CD4-positive, alpha-beta memory T cell (primary cell): ENCODE measurements at regions of chr3 and their contacts with region 1.

Region 1: DNA sequence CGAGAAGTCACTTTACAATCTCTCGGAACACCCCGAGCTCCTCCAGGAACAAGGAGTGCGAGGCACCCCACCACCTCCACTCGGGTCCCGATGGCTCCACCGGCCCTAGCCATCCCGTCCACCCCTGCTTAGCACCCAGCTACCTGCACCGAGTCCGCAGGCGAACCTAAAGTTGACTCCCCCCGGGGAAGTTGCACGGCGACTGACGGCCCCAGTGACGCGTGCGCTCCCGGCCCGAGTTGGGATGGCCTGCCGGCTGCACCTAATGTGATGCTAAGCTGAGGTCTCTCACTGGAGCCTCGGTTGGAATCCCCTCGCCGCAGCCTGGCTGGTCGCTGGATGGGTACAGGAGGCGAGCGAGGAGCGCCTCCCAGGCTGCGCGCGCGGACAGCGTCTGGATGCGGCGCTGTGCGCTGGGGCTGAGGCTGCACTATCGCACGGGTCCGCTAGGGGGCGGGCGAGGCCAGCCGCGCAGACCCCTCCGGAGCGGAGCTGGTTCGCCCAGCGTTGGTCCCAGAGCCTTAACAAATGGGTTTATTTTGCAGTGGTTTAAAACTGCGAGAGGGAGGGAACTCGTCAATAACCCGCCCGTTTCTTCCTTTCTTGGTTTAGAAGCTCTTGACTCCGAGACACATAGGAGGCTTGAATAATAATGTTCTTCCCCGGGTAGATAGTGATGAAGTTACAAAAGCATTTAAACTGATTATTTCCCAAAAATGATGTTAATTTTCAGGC is at the start of gene OXTR:
- DNase-seq: peak in 4 of 5 donors; percentile 18 to 33 (median 21)
- H3K4me3 ChIP-seq: peak within 1 kb of the TSS in 1 of 2 donors; percentile 19
- H3K4me3 Mint-ChIP-seq: peak within 1 kb of the TSS in 7 of 8 donors; percentile 2 to 75 (median 51)
- H3K27ac ChIP-seq: no peak within 1 kb of the TSS
- H3K27ac Mint-ChIP-seq: no peak within 1 kb of the TSS
- H3K4me1 ChIP-seq: peaks cover 13% of the 10 kb centered on the region
- H3K4me1 Mint-ChIP-seq: peaks cover 4 to 13% (median 7%) of the 10 kb centered on the region in 4 donors
- H3K27me3 ChIP-seq: peaks cover 9% of the 10 kb centered on the region
- H3K27me3 Mint-ChIP-seq: peaks cover 22 to 26% of the 10 kb centered on the region in 2 donors
- total RNA-seq, gene OXTR: 0.94 to 1.1 TPM

Region 2: DNA sequence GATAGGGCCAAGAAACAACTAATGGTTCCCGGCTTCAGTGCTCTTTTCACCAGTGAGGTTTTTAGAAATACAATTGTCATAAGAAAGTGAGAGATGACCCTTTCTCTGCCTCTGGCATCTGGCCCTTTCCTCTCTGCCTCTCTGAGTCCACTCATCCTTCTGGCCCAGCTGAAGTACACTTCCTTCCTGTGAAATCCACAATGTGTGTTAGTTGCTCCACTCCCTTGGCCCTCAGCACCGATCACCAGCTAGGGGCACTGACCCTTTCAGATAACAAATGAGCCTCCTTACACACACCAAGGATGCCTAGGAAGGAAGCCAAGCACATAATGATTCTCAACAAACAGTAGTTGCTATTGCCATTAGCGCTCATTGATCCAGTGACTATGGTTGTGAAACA is 38.6 kb before region 1 on chr3:
- CTCF ChIA-PET with region 1: no interaction called
- POLR2A ChIA-PET with region 1: no interaction called
- intact Hi-C with region 1: no loop called
- DNase-seq: no peak
- H3K4me3 ChIP-seq: no peak overlapping the region
- H3K4me3 Mint-ChIP-seq: no peak overlapping the region
- H3K27ac ChIP-seq: no peak overlapping the region
- H3K27ac Mint-ChIP-seq: no peak overlapping the region
- H3K4me1 ChIP-seq: no peaks in the 10 kb centered on the region
- H3K4me1 Mint-ChIP-seq: no peaks in the 10 kb centered on the region
- H3K27me3 ChIP-seq: no peaks in the 10 kb centered on the region
- H3K27me3 Mint-ChIP-seq: peaks cover 8 to 11% of the 10 kb centered on the region in 2 donors

Region 3: GRCh38 chr3:8759038-8759707 is 10.1 kb before region 1 on chr3:
- CTCF ChIA-PET with region 1: interaction called, 11 read pairs
- POLR2A ChIA-PET with region 1: no interaction called
- intact Hi-C with region 1: no loop called
- DNase-seq: no peak
- H3K4me3 ChIP-seq: no peak overlapping the region
- H3K4me3 Mint-ChIP-seq: no peak overlapping the region
- H3K27ac ChIP-seq: no peak overlapping the region
- H3K27ac Mint-ChIP-seq: no peak overlapping the region
- H3K4me1 ChIP-seq: no peaks in the 10 kb centered on the region
- H3K4me1 Mint-ChIP-seq: no peaks in the 10 kb centered on the region
- H3K27me3 ChIP-seq: no peaks in the 10 kb centered on the region
- H3K27me3 Mint-ChIP-seq: peaks cover 0 to 6% of the 10 kb centered on the region in 2 donors